A673 (cell line): ENCODE measurements at regions of chr3 and their contacts with region 1.

Region 1: DNA sequence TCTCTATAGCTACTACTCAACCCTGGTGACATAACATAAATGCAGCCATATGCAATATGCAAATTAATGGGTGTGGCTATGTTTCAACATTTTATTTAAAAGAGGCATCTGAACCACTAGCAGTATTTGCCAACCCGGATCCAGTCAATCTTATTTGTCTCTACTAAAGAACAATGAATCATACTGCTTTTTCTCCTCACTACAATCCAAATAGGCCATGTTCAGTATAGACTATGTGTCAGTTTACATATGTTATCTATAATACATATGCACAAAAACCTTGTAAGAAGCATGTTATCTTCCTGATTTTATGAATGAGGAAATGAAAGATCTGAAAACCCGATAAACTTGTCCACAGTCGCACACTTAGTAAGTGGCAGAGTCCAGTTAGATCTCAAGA is 125.7 kb downstream of the STAG1 start:
- DNase-seq: no peak
- H3K4me3 ChIP-seq: no peak overlapping the region
- H3K27ac ChIP-seq: no peak overlapping the region
- H3K4me1 ChIP-seq: peaks cover 6% of the 10 kb centered on the region
- H3K27me3 ChIP-seq: no peaks in the 10 kb centered on the region
- CTCF ChIP-seq: no peak

Region 2: GRCh38 chr3:135992072-135992471 is 634.4 kb before region 1 on chr3:
- CTCF ChIA-PET with region 1: no interaction called
- POLR2A ChIA-PET with region 1: no interaction called
- intact Hi-C with region 1: no loop called
- DNase-seq: no peak
- H3K4me3 ChIP-seq: no peak overlapping the region
- H3K27ac ChIP-seq: no peak overlapping the region
- H3K4me1 ChIP-seq: no peaks in the 10 kb centered on the region
- H3K27me3 ChIP-seq: peaks cover 68% of the 10 kb centered on the region
- CTCF ChIP-seq: no peak

Region 3: DNA sequence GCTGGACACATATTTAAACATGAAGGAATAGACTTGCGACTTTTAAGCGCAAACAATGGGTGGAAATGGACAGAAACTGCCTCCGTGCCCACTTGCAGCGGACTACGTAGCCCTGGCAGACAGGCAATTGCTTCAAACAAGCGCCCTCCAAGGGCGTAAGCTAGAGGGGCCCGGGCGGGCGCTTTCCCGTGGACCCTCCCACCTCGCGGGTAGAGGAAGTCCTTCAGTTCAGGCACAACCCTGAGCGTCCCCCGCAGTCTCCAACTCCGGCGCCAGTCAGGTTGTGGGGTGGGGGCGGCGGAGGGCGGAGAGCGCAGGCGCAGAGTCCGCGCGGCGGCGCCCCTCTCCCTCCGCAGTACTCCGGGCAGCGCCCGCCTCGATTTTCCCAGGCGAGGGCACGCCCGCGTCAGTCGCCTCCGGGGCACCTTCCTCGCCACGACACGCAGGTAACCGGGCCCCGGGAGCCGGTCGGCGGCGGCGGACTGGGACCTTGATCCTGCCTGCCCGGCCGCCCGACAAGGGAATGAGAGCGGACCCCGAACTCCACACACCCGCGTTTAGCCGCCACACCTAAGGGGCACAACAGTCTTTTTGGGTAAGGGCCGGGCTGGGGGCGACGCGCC is 192.4 kb after region 1 on chr3 and contains the start of gene SLC35G2:
- CTCF ChIA-PET with region 1: no interaction called
- POLR2A ChIA-PET with region 1: interaction called, 23 read pairs
- intact Hi-C with region 1: no loop called
- DNase-seq: peak; percentile 90
- H3K4me3 ChIP-seq: peak within 1 kb of the TSS; percentile 68
- H3K27ac ChIP-seq: peak within 1 kb of the TSS; percentile 87
- H3K4me1 ChIP-seq: peaks cover 18% of the 10 kb centered on the region
- H3K27me3 ChIP-seq: no peaks in the 10 kb centered on the region
- CTCF ChIP-seq: no peak
- total RNA-seq, gene SLC35G2: 25.0 and 26.4 TPM in 2 replicates

Region 4: GRCh38 chr3:137615659-137616418 is 989.3 kb after region 1 on chr3:
- CTCF ChIA-PET with region 1: no interaction called
- POLR2A ChIA-PET with region 1: no interaction called
- intact Hi-C with region 1: no loop called
- DNase-seq: no peak
- H3K4me3 ChIP-seq: no peak overlapping the region
- H3K27ac ChIP-seq: no peak overlapping the region
- H3K4me1 ChIP-seq: no peaks in the 10 kb centered on the region
- H3K27me3 ChIP-seq: peaks cover 14% of the 10 kb centered on the region
- CTCF ChIP-seq: no peak